Activated CD4-positive, alpha-beta T cell treated with anti-CD3 and anti-CD28 coated beads, Interleukin-2, amount 10 ng/mL, durations not matched to agents 24 days and 14 days (primary cell): ENCODE measurements at regions of chr4 and their contacts with region 1.

Region 1: GRCh38 chr4:154329268-154329868 is 162.2 kb downstream of the DCHS2 start:
- DNase-seq: no peak
- H3K4me3 Mint-ChIP-seq: no peak overlapping the region
- H3K27ac Mint-ChIP-seq: no peak overlapping the region
- H3K4me1 Mint-ChIP-seq: peaks cover 12% of the 10 kb centered on the region
- H3K27me3 Mint-ChIP-seq: peaks cover 30% of the 10 kb centered on the region

Region 2: GRCh38 chr4:154277172-154277571 is 52.2 kb before region 1 on chr4:
- intact Hi-C with region 1: no loop called
- DNase-seq: no peak
- H3K4me3 Mint-ChIP-seq: no peak overlapping the region
- H3K27ac Mint-ChIP-seq: no peak overlapping the region
- H3K4me1 Mint-ChIP-seq: no peaks in the 10 kb centered on the region
- H3K27me3 Mint-ChIP-seq: peaks cover 4% of the 10 kb centered on the region

Region 3: GRCh38 chr4:154503598-154503997 is 174.2 kb after region 1 on chr4:
- intact Hi-C with region 1: loop called (anchors 5 kb)
- DNase-seq: no peak
- H3K4me3 Mint-ChIP-seq: no peak overlapping the region
- H3K27ac Mint-ChIP-seq: no peak overlapping the region
- H3K4me1 Mint-ChIP-seq: no peaks in the 10 kb centered on the region
- H3K27me3 Mint-ChIP-seq: peaks cover 43% of the 10 kb centered on the region

Region 4: GRCh38 chr4:154526151-154526550 is 196.8 kb after region 1 on chr4:
- intact Hi-C with region 1: no loop called
- DNase-seq: no peak
- H3K4me3 Mint-ChIP-seq: no peak overlapping the region
- H3K27ac Mint-ChIP-seq: no peak overlapping the region
- H3K4me1 Mint-ChIP-seq: peaks cover 3% of the 10 kb centered on the region
- H3K27me3 Mint-ChIP-seq: peaks cover 24% of the 10 kb centered on the region